ENCODE measurements at regions of chr2 and their contacts with region 1.

Region 1: DNA sequence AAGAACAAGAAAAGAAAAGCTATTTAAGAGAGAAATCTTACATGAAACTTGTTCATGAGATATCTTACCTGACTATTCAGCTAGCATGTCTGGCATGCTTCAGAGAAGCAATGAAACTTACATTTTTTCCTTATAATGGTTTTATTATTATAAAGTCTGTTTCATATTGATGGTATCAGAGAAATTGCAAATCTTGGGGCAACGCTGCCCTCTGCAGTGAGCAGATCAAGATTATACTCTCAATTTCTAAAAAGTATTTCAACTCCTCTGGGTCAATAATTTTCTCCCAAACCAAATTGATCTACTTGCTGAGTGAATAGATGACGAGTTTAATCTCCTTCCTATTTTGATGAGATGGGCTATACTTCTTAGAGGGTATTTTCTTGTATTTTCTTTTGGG is 235.6 kb downstream of the NUP35 start:
- DNase-seq: no peak
- ATAC-seq: no peak
- H3K4me3 Mint-ChIP-seq: no peak overlapping the region
- H3K27ac Mint-ChIP-seq: no peak overlapping the region
- H3K4me1 Mint-ChIP-seq: no peaks in the 10 kb centered on the region
- H3K27me3 Mint-ChIP-seq: no peaks in the 10 kb centered on the region
- CTCF ChIP-seq: no peak

Region 2: DNA sequence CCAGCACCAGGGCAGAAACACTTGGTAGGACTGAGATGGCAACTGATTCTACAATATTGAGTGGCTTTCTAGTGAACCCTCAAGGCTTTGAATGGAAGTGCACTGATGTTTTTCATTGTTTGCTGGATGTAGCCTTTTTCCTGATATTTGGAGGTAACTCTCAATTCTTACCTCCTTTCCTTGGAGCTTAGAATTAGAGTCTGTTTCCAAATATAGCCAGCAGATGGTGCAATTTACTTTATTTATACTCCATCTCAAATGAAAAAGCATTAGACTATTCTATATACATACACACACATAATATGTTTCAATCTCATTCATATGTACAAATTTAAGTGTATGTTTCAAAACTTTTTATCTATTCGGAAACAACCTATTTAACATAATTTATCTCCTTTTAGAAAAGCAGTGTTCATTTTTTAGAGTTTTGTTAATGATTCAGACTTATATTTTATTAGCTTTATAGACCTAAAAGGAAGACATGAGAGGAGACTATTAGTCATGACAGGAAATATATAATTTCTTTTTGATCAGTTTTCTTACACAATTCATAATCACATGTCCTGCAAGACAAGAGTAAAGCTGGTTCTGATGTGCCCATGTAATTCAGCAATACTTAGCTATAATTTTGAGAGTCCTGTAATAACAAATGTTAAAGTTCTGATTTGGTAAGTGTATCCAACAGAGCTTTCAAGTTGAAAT is 110.8 kb before region 1 on chr2:
- CTCF ChIA-PET with region 1: no interaction called
- POLR2A ChIA-PET with region 1: no interaction called
- intact Hi-C with region 1: loop called (anchors 2 kb)
- DNase-seq: no peak
- ATAC-seq: no peak
- H3K4me3 Mint-ChIP-seq: no peak overlapping the region
- H3K27ac Mint-ChIP-seq: no peak overlapping the region
- H3K4me1 Mint-ChIP-seq: no peaks in the 10 kb centered on the region
- H3K27me3 Mint-ChIP-seq: no peaks in the 10 kb centered on the region
- CTCF ChIP-seq: no peak

Measured in activated B cell treated with CpG ODN at 0.5 μM for 24 hours (primary cell).